CD4-positive, alpha-beta memory T cell (primary cell): ENCODE measurements at regions of chr16 and their contacts with region 1.

Region 1: DNA sequence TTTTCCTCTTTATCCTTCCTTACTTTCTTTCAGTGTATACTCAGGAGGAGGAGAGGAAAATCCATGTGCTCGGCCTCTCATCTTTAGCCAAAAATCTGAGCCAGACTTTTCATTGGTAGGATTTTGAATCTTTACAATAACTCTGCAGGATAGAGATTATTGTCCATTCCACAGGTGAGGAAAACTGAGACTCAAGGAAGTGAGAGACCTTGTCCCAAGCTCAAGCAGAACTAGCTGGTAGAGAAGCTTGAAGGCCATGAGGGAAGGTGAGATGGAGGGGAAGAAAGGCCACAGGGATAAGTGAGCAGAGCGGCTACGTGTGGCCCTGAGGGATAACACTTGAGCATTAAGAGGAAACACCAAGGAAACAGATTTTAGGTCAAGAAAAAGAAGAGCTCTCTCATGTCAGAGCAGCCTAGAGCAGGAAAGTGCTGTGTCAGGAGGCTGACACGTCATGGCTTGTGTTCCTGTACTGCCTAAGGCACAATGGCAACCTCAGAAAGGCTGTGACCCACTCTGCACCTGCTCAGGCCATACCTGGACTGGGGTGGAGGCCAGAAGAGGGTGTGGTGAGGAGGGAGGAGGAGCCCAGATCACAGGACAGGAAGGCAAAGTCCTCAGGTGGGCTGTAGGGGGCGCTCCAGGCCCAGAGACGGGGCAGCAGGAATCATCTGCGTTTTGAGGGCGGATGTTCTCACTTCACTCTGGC is 11.9 kb downstream of the MT4 start:
- DNase-seq: peak; percentile 85 to 89 (median 87)
- H3K4me3 ChIP-seq: no peak overlapping the region
- H3K4me3 Mint-ChIP-seq: no peak overlapping the region
- H3K27ac ChIP-seq: no peak overlapping the region
- H3K27ac Mint-ChIP-seq: peak overlapping the region in 6 of 7 donors; percentile 36 to 79 (median 58)
- H3K4me1 ChIP-seq: no peaks in the 10 kb centered on the region
- H3K4me1 Mint-ChIP-seq: peaks cover 4 to 9% (median 6%) of the 10 kb centered on the region in 4 donors
- H3K27me3 ChIP-seq: no peaks in the 10 kb centered on the region
- H3K27me3 Mint-ChIP-seq: no peaks in the 10 kb centered on the region

Region 2: GRCh38 chr16:56425439-56425832 is 151.3 kb before region 1 on chr16 and contains the start of gene AMFR:
- CTCF ChIA-PET with region 1: no interaction called
- POLR2A ChIA-PET with region 1: no interaction called
- intact Hi-C with region 1: no loop called
- DNase-seq: peak; percentile 63 to 83 (median 78)
- H3K4me3 ChIP-seq: peak within 1 kb of the TSS; percentile 65 to 70
- H3K4me3 Mint-ChIP-seq: peak within 1 kb of the TSS; percentile 92 to 99 (median 96)
- H3K27ac ChIP-seq: peak within 1 kb of the TSS; percentile 65
- H3K27ac Mint-ChIP-seq: peak within 1 kb of the TSS; percentile 84 to 97 (median 93)
- H3K4me1 ChIP-seq: peaks cover 38% of the 10 kb centered on the region
- H3K4me1 Mint-ChIP-seq: peaks cover 30 to 42% (median 37%) of the 10 kb centered on the region in 4 donors
- H3K27me3 ChIP-seq: no peaks in the 10 kb centered on the region
- H3K27me3 Mint-ChIP-seq: no peaks in the 10 kb centered on the region
- total RNA-seq, gene AMFR: 59.8 to 67.6 TPM

Region 3: DNA sequence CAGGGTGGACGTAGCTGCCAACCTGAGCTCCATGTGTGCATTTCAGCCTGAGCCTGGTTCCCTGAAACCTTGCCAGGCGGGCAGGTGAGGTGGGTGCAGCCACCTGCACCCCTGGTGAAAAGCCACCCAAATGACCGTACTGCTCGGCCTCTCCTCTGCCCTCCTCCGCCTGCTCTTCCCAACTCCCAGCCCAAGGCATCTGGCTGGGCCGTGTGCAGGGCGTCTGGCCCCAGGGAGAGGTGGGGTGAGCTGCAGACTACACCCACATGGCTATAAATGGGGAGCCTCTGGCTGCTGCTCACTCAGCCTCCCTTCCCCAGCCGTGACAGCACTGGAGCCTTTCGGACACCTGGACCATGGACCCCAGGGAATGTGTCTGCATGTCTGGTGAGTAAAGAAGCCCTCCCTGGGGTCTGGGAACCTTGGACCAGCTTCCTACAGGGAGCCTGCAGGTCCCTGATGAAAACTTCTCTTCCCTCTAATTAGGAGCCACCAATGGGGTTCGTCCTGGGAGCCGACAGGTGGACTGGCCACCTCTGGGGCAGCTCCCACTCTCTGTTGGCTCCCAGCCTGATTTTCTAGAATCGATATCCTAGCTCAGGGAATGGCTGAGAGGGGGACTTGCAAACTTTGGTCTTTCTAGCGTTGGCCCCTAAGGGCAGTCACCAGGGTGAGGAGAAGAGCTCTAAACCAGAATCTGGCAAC is 11.8 kb before region 1 on chr16 and contains the start of gene MT4:
- CTCF ChIA-PET with region 1: interaction called, 11 read pairs
- POLR2A ChIA-PET with region 1: no interaction called
- intact Hi-C with region 1: no loop called
- DNase-seq: no peak
- H3K4me3 ChIP-seq: no peak within 1 kb of the TSS
- H3K4me3 Mint-ChIP-seq: no peak within 1 kb of the TSS
- H3K27ac ChIP-seq: no peak within 1 kb of the TSS
- H3K27ac Mint-ChIP-seq: peak within 1 kb of the TSS in 1 of 7 donors; percentile 18
- H3K4me1 ChIP-seq: no peaks in the 10 kb centered on the region
- H3K4me1 Mint-ChIP-seq: no peaks in the 10 kb centered on the region
- H3K27me3 ChIP-seq: no peaks in the 10 kb centered on the region
- H3K27me3 Mint-ChIP-seq: peaks cover 6 to 8% of the 10 kb centered on the region in 2 donors
- total RNA-seq, gene MT4: not detected

Region 4: GRCh38 chr16:56600398-56600999 is 23.8 kb after region 1 on chr16:
- CTCF ChIA-PET with region 1: interaction called, 16 read pairs
- POLR2A ChIA-PET with region 1: no interaction called
- intact Hi-C with region 1: no loop called
- DNase-seq: peak in 4 of 5 donors; percentile 38 to 43 (median 41)
- H3K4me3 ChIP-seq: no peak overlapping the region
- H3K4me3 Mint-ChIP-seq: no peak overlapping the region
- H3K27ac ChIP-seq: no peak overlapping the region
- H3K27ac Mint-ChIP-seq: peak overlapping the region in 3 of 7 donors; percentile 37 to 80 (median 66)
- H3K4me1 ChIP-seq: no peaks in the 10 kb centered on the region
- H3K4me1 Mint-ChIP-seq: peaks cover 0 to 7% (median 6%) of the 10 kb centered on the region in 4 donors
- H3K27me3 ChIP-seq: no peaks in the 10 kb centered on the region
- H3K27me3 Mint-ChIP-seq: peaks cover 6 to 12% of the 10 kb centered on the region in 2 donors

Region 5: GRCh38 chr16:56643080-56643778 is 66.5 kb after region 1 on chr16:
- CTCF ChIA-PET with region 1: interaction called, 16 read pairs
- POLR2A ChIA-PET with region 1: no interaction called
- intact Hi-C with region 1: loop called (anchors 1 kb)
- DNase-seq: peak; percentile 63 to 76 (median 71)
- H3K4me3 ChIP-seq: peak overlapping the region in 1 of 2 donors; percentile 0
- H3K4me3 Mint-ChIP-seq: peak overlapping the region; percentile 75 to 84 (median 79)
- H3K27ac ChIP-seq: no peak overlapping the region
- H3K27ac Mint-ChIP-seq: peak overlapping the region in 5 of 7 donors; percentile 63 to 77 (median 67)
- H3K4me1 ChIP-seq: peaks cover 16% of the 10 kb centered on the region
- H3K4me1 Mint-ChIP-seq: peaks cover 18 to 22% (median 19%) of the 10 kb centered on the region in 4 donors
- H3K27me3 ChIP-seq: peaks cover 14% of the 10 kb centered on the region
- H3K27me3 Mint-ChIP-seq: peaks cover 12 to 23% of the 10 kb centered on the region in 2 donors

Region 6: GRCh38 chr16:56708525-56709442 is 132.0 kb after region 1 on chr16:
- CTCF ChIA-PET with region 1: interaction called, 150 read pairs
- POLR2A ChIA-PET with region 1: no interaction called
- intact Hi-C with region 1: no loop called
- DNase-seq: peak in 3 of 5 donors; percentile 11 to 27 (median 22)
- H3K4me3 ChIP-seq: peak overlapping the region in 1 of 2 donors; percentile 29
- H3K4me3 Mint-ChIP-seq: peak overlapping the region; percentile 56 to 82 (median 62)
- H3K27ac ChIP-seq: no peak overlapping the region
- H3K27ac Mint-ChIP-seq: peak overlapping the region in 6 of 7 donors; percentile 54 to 74 (median 64)
- H3K4me1 ChIP-seq: peaks cover 20% of the 10 kb centered on the region
- H3K4me1 Mint-ChIP-seq: peaks cover 12 to 23% (median 15%) of the 10 kb centered on the region in 4 donors
- H3K27me3 ChIP-seq: no peaks in the 10 kb centered on the region
- H3K27me3 Mint-ChIP-seq: no peaks in the 10 kb centered on the region